H1 (cell line): ENCODE measurements at regions of chr20 and their contacts with region 1.

Region 1: GRCh38 chr20:45934586-45935415 is at the start of gene PCIF1:
- DNase-seq: peak; percentile 91 to 99
- H3K4me3 ChIP-seq: peak within 1 kb of the TSS; percentile 76 to 91 (median 86)
- H3K27ac ChIP-seq: peak within 1 kb of the TSS; percentile 100
- H3K4me1 ChIP-seq: peaks cover 5 to 31% (median 14%) of the 10 kb centered on the region in 4 experiments
- H3K27me3 ChIP-seq: no peaks in the 10 kb centered on the region
- CTCF ChIP-seq: no peak; a peak in 1 of 4 replicates
- EP300 ChIP-seq: peak in 1 of 2 experiments; percentile 21; a peak in 1 of 3 replicates
- POLR2A ChIP-seq: peak; percentile 94 to 95
- RAD21 ChIP-seq: no peak
- total RNA-seq, gene PCIF1: 27.2 and 30.3 TPM in 2 replicates

Region 2: GRCh38 chr20:45823949-45824835 is 110.6 kb before region 1 on chr20:
- CTCF ChIA-PET with region 1: no interaction called
- POLR2A ChIA-PET with region 1: interaction called, 17 read pairs
- DNase-seq: peak; percentile 53 to 77
- H3K4me3 ChIP-seq: peak overlapping the region in 3 of 4 experiments; percentile 5 to 44 (median 6); a peak in 4 of 8 replicates
- H3K27ac ChIP-seq: no peak overlapping the region
- H3K4me1 ChIP-seq: peaks cover 0 to 12% (median 5%) of the 10 kb centered on the region in 4 experiments; a peak in 6 of 7 replicates
- H3K27me3 ChIP-seq: peaks cover 0 to 12% (median 10%) of the 10 kb centered on the region in 4 experiments; a peak in 4 of 7 replicates
- CTCF ChIP-seq: peak; percentile 58 to 78 (median 72)
- EP300 ChIP-seq: no peak
- POLR2A ChIP-seq: 0 out of 3 replicates have a peak, but pooled peaks of 1 of the 2 experiments have one; percentile 42
- RAD21 ChIP-seq: peak; percentile 74 to 77

Region 3: DNA sequence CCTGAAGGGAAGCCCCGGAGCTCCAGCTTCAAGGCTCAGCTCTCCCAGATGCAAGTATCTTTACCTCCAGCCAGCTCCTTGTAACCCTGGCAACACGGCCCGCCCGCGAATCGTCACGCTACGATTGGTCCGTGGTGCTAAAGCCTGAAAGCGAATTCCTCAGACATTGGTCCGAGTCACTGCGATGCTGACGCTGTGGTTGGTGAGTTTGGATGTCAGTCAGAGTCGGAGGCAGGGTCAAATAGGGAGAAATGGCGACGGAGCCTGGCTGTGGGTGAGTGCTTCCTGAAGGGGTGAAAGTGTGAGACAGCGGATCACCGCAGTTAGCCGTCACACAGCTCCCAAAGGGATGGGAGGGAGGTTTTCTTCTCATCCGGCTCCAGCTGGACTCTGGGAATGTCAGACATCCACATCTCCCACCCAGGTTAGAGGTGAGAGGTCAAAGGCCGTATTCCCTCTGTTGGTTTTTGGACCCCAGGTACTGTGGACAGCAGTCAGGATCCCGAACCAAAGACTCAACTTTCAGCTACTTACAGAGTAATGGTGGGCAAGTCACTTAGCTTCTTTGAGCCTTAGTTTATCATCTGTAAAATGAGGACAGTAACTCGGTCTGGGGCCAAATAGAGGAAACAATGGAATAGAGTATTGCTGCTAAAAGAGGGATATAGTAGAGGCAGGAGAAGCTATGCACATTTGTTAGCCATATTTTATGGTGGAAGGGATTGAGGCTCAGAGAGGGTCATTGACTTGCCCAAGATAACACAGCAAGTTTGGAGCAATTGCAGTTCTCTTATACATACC is 53.6 kb before region 1 on chr20 and contains the start of gene ZSWIM1:
- CTCF ChIA-PET with region 1: no interaction called
- POLR2A ChIA-PET with region 1: interaction called, 14 read pairs
- DNase-seq: peak; percentile 98 to 99
- H3K4me3 ChIP-seq: peak within 1 kb of the TSS; percentile 80 to 99 (median 90)
- H3K27ac ChIP-seq: peak within 1 kb of the TSS; percentile 69
- H3K4me1 ChIP-seq: no peaks in the 10 kb centered on the region
- H3K27me3 ChIP-seq: no peaks in the 10 kb centered on the region
- CTCF ChIP-seq: no peak
- EP300 ChIP-seq: no peak
- POLR2A ChIP-seq: peak; percentile 61 to 88
- RAD21 ChIP-seq: no peak
- total RNA-seq, gene ZSWIM1: 15.6 and 16.7 TPM in 2 replicates

Region 4: GRCh38 chr20:45905505-45906079 is 29.2 kb before region 1 on chr20:
- CTCF ChIA-PET with region 1: interaction called, 12 read pairs
- POLR2A ChIA-PET with region 1: interaction called, 65 read pairs
- DNase-seq: no peak
- H3K4me3 ChIP-seq: no peak overlapping the region
- H3K27ac ChIP-seq: no peak overlapping the region
- H3K4me1 ChIP-seq: no peaks in the 10 kb centered on the region; a peak in 1 of 7 replicates
- H3K27me3 ChIP-seq: no peaks in the 10 kb centered on the region
- CTCF ChIP-seq: no peak
- EP300 ChIP-seq: no peak
- POLR2A ChIP-seq: no peak
- RAD21 ChIP-seq: no peak

Region 5: GRCh38 chr20:45946149-45946970 is 11.6 kb after region 1 on chr20:
- CTCF ChIA-PET with region 1: interaction called, 11 read pairs
- POLR2A ChIA-PET with region 1: interaction called, 283 read pairs
- DNase-seq: no peak
- H3K4me3 ChIP-seq: no peak overlapping the region
- H3K27ac ChIP-seq: no peak overlapping the region
- H3K4me1 ChIP-seq: no peaks in the 10 kb centered on the region
- H3K27me3 ChIP-seq: no peaks in the 10 kb centered on the region; a peak in 1 of 7 replicates
- CTCF ChIP-seq: no peak
- EP300 ChIP-seq: no peak
- POLR2A ChIP-seq: no peak
- RAD21 ChIP-seq: no peak

Region 6: DNA sequence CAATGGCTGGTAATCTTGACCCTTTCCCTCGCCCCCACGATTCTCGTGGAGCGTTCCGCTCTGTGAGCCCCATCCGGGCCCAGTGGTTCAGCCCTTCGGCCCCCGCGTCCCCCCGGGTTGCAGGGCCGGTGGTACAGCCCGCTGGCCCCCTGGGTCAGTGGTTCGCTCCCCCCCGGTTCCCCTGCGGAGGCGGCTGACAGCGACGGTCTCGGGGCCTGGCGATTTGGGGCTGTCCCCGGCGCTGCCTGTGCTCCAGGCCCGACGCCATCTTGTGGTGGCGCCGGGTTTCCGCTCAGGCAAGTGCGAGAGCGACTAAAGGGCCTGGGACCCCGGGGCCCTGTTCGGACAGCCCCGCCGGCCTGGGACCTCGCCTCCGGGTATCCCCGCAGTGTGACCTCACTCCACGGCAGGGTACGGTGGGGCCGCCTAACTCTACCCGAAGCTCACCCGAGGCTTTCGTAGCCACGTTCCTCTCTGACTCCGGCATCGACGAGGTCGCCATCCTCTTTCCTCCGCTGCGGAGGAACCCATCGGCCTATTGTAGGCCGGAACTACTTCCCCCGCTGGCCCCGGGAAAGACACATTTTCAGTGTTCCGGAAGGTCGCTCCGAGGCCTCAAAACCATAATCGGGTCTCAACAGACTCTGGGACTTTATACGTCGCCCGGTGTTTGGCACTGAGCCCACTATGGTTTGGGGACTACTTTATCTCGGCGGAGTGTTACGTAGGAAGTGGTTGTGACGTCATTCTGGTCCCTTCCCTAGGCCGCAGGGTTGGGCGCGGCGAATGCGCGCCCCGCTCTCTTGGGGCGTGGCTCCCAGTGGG is 37.1 kb after region 1 on chr20 and contains the start of gene ZNF335:
- CTCF ChIA-PET with region 1: interaction called, 13 read pairs
- POLR2A ChIA-PET with region 1: interaction called, 43 read pairs
- DNase-seq: peak; percentile 88 to 96
- H3K4me3 ChIP-seq: peak within 1 kb of the TSS; percentile 67 to 99 (median 82)
- H3K27ac ChIP-seq: peak within 1 kb of the TSS; percentile 100
- H3K4me1 ChIP-seq: peaks cover 0 to 8% (median 2%) of the 10 kb centered on the region in 4 experiments; a peak in 4 of 7 replicates
- H3K27me3 ChIP-seq: no peaks in the 10 kb centered on the region
- CTCF ChIP-seq: peak in 1 of 3 experiments; percentile 18; a peak in 1 of 4 replicates
- EP300 ChIP-seq: peak in 1 of 2 experiments; percentile 99; a peak in 2 of 3 replicates
- POLR2A ChIP-seq: peak in 1 of 2 experiments; percentile 88; a peak in 2 of 3 replicates
- RAD21 ChIP-seq: no peak
- total RNA-seq, gene ZNF335: 14.6 and 15.9 TPM in 2 replicates

Region 7: DNA sequence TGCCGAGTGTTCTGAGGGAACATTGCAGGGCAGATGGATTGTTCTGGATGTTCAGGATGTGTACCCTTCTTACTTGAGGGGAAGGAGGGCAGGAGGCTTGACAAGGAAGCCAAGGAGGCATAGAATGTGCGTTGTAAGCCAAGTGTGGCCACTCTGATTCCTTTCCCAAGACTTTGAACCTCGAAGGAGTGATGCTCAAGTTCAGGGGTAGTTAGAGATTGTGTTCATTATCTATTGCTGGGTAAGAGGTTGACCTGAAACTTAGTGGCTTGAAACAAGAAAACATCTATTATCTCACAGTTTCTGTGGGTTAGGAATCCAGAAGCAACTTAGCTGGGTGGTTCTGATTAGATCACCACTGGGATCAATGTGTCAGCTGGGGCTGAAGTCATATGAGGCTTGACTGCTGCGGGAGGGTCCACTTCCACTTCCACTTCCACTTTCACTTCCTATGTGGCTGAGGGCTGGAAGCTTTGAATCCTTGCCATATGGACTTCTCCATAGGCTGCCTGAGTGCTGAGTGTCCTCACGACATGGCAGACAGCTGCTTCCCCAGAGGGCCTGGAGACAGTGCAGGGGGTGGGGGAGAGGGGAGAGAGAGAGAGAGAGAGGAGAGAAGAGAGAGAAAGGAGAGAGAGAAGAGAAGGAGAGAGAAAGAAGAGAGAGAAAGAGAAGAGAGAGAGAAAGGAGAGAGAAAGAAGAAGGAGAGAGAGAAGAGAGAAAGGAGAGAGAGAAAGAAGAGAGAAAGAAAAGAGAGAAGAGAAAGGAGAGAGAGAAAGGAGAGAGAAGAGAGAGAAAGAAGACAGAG is 176.4 kb after region 1 on chr20:
- CTCF ChIA-PET with region 1: no interaction called
- POLR2A ChIA-PET with region 1: no interaction called
- DNase-seq: no peak
- H3K4me3 ChIP-seq: no peak overlapping the region
- H3K27ac ChIP-seq: no peak overlapping the region
- H3K4me1 ChIP-seq: no peaks in the 10 kb centered on the region
- H3K27me3 ChIP-seq: peaks cover 2 to 11% (median 4%) of the 10 kb centered on the region in 4 experiments; a peak in 5 of 7 replicates
- CTCF ChIP-seq: no peak
- EP300 ChIP-seq: no peak
- POLR2A ChIP-seq: no peak
- RAD21 ChIP-seq: no peak

Region 8: GRCh38 chr20:46215913-46216707 is 281.3 kb after region 1 on chr20:
- CTCF ChIA-PET with region 1: no interaction called
- POLR2A ChIA-PET with region 1: no interaction called
- DNase-seq: peak; percentile 77 to 81
- H3K4me3 ChIP-seq: peak overlapping the region in 2 of 4 experiments; percentile 17 to 29; a peak in 2 of 8 replicates
- H3K27ac ChIP-seq: no peak overlapping the region
- H3K4me1 ChIP-seq: peaks cover 0 to 23% (median 17%) of the 10 kb centered on the region in 4 experiments; a peak in 6 of 7 replicates
- H3K27me3 ChIP-seq: no peaks in the 10 kb centered on the region; a peak in 2 of 7 replicates
- CTCF ChIP-seq: no peak
- EP300 ChIP-seq: 0 out of 3 replicates have a peak, but pooled peaks of 1 of the 2 experiments have one; percentile 5
- POLR2A ChIP-seq: no peak
- RAD21 ChIP-seq: no peak; a peak in 1 of 4 replicates